AG04450 (cell line): ENCODE measurements at regions of chr2 and their contacts with region 1.

Region 1: GRCh38 chr2:149330126-149331022 is at the start of gene LYPD6:
- DNase-seq: no peak
- H3K4me3 ChIP-seq: peak within 1 kb of the TSS; percentile 69
- H3K27ac ChIP-seq: peak within 1 kb of the TSS; percentile 4
- H3K27me3 ChIP-seq: peaks cover 12% of the 10 kb centered on the region
- CTCF ChIP-seq: peak; percentile 8
- polyA plus RNA-seq, gene LYPD6: 1.1 and 1.3 TPM in 2 replicates

Region 2: GRCh38 chr2:149098701-149099100 is 231.7 kb before region 1 on chr2:
- CTCF ChIA-PET with region 1: no interaction called
- POLR2A ChIA-PET with region 1: no interaction called
- DNase-seq: no peak
- H3K4me3 ChIP-seq: no peak overlapping the region
- H3K27ac ChIP-seq: no peak overlapping the region
- H3K27me3 ChIP-seq: no peaks in the 10 kb centered on the region
- CTCF ChIP-seq: no peak

Region 3: GRCh38 chr2:149236410-149236809 is 94.0 kb before region 1 on chr2:
- CTCF ChIA-PET with region 1: no interaction called
- POLR2A ChIA-PET with region 1: no interaction called
- DNase-seq: no peak
- H3K4me3 ChIP-seq: no peak overlapping the region
- H3K27ac ChIP-seq: no peak overlapping the region
- H3K27me3 ChIP-seq: no peaks in the 10 kb centered on the region
- CTCF ChIP-seq: no peak

Region 4: GRCh38 chr2:149313512-149313972 is 16.8 kb before region 1 on chr2:
- CTCF ChIA-PET with region 1: interaction called, 15 read pairs
- POLR2A ChIA-PET with region 1: no interaction called
- DNase-seq: no peak
- H3K4me3 ChIP-seq: no peak overlapping the region
- H3K27ac ChIP-seq: no peak overlapping the region
- H3K27me3 ChIP-seq: peaks cover 2% of the 10 kb centered on the region
- CTCF ChIP-seq: peak; percentile 85

Region 5: DNA sequence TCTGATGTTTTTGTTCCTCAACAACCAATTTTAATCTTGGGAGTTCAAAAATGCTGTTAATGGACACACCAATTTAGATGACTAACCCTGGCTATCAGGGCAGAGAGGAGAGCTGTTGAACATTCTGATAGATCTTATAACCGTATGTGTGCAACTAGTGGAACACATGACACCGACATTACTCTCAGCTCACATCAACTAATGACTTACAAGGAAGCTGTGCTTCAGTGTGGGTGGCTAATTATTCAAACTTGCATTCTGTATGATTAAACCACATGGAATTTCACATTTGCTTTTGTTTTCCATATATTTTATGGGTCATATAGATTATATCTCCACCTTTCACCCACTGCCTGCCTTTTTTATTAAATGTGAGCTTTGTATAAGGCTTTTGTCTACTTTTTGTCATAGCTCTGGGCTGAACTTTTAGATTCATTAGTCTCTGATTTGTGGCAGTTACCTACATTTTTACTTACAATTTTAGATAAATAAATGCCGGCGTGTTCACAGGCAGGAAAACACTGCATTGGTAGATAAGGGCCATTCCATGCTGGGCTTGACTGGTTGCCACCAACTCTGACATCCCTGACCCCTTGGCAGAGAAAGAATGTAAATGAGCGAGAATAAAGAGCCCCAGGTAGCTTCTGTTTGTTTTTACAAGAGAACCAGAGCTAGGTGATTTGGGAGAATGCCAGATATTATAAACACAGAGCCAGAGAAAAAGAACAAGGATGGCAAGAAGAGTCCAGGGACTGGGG is 35.6 kb after region 1 on chr2:
- CTCF ChIA-PET with region 1: no interaction called
- POLR2A ChIA-PET with region 1: no interaction called
- DNase-seq: no peak
- H3K4me3 ChIP-seq: no peak overlapping the region
- H3K27ac ChIP-seq: no peak overlapping the region
- H3K27me3 ChIP-seq: no peaks in the 10 kb centered on the region
- CTCF ChIP-seq: no peak

Region 6: GRCh38 chr2:149420053-149420963 is 89.9 kb after region 1 on chr2:
- CTCF ChIA-PET with region 1: no interaction called
- POLR2A ChIA-PET with region 1: no interaction called
- DNase-seq: no peak
- H3K4me3 ChIP-seq: no peak overlapping the region
- H3K27ac ChIP-seq: no peak overlapping the region
- H3K27me3 ChIP-seq: no peaks in the 10 kb centered on the region
- CTCF ChIP-seq: no peak